ENCODE measurements at regions of chr18 and their contacts with region 1.

Region 1: GRCh38 chr18:67199993-67200617 is 316.4 kb downstream of the DSEL start:
- DNase-seq: peak in 1 of 3 donors; percentile 9
- ATAC-seq: peak; percentile 34
- H3K4me3 ChIP-seq: no peak overlapping the region
- H3K4me1 ChIP-seq: no peaks in the 10 kb centered on the region
- CTCF ChIP-seq: no peak

Region 2: DNA sequence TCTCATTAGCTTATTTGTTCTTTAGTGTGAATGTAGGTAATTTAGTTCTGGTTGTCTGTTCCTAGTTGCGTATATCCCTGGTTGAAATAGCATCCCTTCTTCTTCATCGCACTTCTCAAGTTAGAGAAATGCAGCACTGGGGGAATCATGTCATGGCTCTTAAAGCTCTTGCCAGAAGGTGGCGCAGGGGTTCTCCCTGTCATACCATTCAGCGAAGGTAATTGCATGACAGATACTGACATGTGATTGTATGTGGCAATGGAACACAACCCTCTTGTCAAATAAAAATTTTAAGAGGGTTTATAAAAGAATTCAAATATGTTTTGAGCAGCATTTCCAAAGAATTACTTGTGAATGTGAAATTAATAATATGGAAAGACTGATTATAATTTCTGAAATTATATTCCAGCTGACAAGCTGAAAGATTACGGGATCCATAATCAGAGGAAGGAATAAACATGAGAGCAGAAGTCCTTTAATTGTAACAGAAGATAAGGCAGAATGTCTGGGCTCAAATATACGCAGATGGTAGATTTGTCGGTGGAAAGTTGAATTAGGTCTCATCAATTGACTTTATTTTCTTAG is 95.3 kb before region 1 on chr18:
- intact Hi-C with region 1: loop called in 1 of 2 experiments (anchors 10 kb)
- DNase-seq: peak in 2 of 3 donors; percentile 33 to 81
- ATAC-seq: peak; percentile 80
- H3K4me3 ChIP-seq: no peak overlapping the region
- H3K4me1 ChIP-seq: no peaks in the 10 kb centered on the region
- CTCF ChIP-seq: peak; percentile 36

Region 3: DNA sequence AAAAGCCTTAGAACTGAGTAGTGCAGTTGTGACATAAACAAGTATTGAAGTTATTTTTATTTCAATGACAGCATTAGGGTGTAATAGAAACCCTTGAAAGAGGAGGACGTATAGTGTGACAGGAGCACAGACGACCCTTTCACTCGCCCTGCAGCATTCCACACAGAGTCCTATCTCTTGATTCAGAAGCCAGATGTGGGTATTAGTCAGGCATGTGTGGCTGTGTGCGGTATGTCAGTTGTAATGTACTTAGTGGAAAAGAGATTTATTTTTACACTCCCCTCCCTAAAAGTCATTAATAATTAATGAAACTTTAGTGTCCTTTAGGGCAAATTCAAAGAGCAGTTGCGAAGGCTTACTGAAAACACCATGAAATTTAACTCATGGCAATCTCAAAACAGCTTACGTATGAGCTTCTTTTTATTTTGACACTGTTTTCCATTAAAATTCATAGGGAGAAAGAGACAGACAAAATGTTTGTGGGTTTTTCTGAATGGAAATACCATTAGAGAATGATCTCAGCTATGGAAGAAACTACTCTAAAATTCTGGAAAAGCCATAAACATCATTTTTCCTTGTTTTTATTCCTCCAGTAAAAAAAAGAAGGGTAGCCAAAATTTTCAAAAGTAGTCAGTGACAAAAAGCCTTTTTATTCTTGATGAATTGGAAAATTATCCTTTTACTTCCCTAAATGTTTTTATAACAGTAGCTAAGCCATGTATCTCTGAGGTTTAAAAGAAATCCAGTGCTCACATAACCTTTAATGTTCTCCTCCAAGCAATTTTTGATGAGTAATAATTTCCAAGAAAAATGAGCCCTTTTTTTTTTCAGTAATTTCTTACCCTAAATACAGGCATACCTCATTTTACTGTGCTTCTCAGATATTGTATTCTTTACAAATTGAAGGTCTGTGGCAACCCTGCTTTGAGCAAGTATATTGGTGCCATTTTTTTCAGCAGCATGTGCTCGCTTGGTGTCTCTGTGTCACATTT is 400.4 kb after region 1 on chr18:
- intact Hi-C with region 1: no loop called
- DNase-seq: no peak
- ATAC-seq: no peak
- H3K4me3 ChIP-seq: no peak overlapping the region
- H3K4me1 ChIP-seq: no peaks in the 10 kb centered on the region
- CTCF ChIP-seq: no peak

Region 4: GRCh38 chr18:68164909-68165308 is 964.8 kb after region 1 on chr18:
- intact Hi-C with region 1: no loop called
- DNase-seq: no peak
- ATAC-seq: no peak
- H3K4me3 ChIP-seq: no peak overlapping the region
- H3K4me1 ChIP-seq: no peaks in the 10 kb centered on the region
- CTCF ChIP-seq: no peak

Measured in mucosa of descending colon (tissue), 3 donors.